ENCODE measurements at regions of chr9 and their contacts with region 1.

Region 1: GRCh38 chr9:19174127-19174912 is 47.0 kb upstream of the PLIN2 start:
- DNase-seq: peak; percentile 29 to 60
- ATAC-seq: peak; percentile 82

Region 2: DNA sequence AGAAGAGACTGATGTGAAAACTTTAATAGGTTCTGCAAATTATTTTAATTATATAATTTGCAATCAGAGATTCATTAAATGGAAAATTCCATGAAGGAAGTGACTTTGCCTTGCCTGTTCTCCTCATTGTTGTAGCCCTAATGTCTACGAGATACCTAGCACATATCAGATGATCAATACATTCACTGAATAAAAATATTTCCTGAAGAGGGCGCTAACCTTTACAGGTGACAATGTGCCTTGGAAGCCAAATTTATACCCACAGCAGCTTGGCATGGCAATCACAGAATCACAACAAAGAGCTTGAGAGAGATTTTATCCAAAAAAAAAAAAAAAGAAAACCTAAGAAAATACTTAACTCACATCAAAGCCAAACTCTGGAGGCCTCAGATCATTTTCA is 89.0 kb before region 1 on chr9:
- intact Hi-C with region 1: loop called in 1 of 2 experiments (anchors 10 kb)
- DNase-seq: no peak
- ATAC-seq: peak; percentile 61

Measured in left colon (tissue), 2 donors.